ENCODE measurements at regions of chr3 and their contacts with region 1.

Region 1: GRCh38 chr3:128617557-128618397 is 32.8 kb downstream of the RPN1 start:
- DNase-seq: peak; percentile 93
- ATAC-seq: peak; percentile 97
- H3K4me3 ChIP-seq: peak overlapping the region; percentile 66
- H3K27ac ChIP-seq: peak overlapping the region; percentile 78
- H3K4me1 ChIP-seq: peaks cover 14% of the 10 kb centered on the region
- H3K27me3 ChIP-seq: no peaks in the 10 kb centered on the region
- CTCF ChIP-seq: peak; percentile 82
- POLR2A ChIP-seq: no peak
- RAD21 ChIP-seq: peak; percentile 62

Region 2: DNA sequence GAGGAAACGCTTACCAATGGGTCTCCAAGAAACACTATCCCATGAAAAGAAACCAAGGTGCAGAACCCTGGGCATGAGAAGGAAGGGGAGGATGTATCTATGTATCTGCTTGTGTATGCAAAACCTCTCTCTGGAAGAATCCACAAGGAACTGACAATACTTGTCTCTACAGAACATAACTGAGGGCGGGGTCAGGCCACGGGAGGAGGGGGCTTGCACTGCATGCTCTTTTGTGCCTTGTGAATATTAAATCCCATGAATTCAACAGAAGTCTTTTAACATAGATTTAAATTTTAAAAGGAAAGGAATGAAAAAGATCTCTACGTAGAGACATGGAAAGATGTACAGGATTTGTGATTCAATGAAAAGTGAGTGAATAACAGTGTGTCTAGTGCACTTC is 24.9 kb before region 1 on chr3:
- CTCF ChIA-PET with region 1: no interaction called
- POLR2A ChIA-PET with region 1: no interaction called
- dilution Hi-C with region 1: no loop called
- in situ Hi-C with region 1: no loop called
- intact Hi-C with region 1: no loop called
- DNase-seq: no peak
- ATAC-seq: no peak
- H3K4me3 ChIP-seq: no peak overlapping the region
- H3K27ac ChIP-seq: no peak overlapping the region
- H3K4me1 ChIP-seq: no peaks in the 10 kb centered on the region; the same call in 1 of the 2 replicates
- H3K27me3 ChIP-seq: no peaks in the 10 kb centered on the region; the same call in none of the 2 replicates
- CTCF ChIP-seq: no peak
- POLR2A ChIP-seq: no peak
- RAD21 ChIP-seq: no peak

Region 3: GRCh38 chr3:128794770-128795649 is 177.2 kb after region 1 on chr3:
- CTCF ChIA-PET with region 1: interaction called, 4 read pairs
- POLR2A ChIA-PET with region 1: no interaction called
- dilution Hi-C with region 1: no loop called
- in situ Hi-C with region 1: no loop called
- intact Hi-C with region 1: loop called (anchors 10 kb)
- DNase-seq: peak; percentile 61
- ATAC-seq: peak; percentile 96
- H3K4me3 ChIP-seq: no peak overlapping the region; the same call in 1 of the 2 replicates
- H3K27ac ChIP-seq: no peak overlapping the region
- H3K4me1 ChIP-seq: peaks cover 6% of the 10 kb centered on the region
- H3K27me3 ChIP-seq: no peaks in the 10 kb centered on the region
- CTCF ChIP-seq: peak; percentile 70
- POLR2A ChIP-seq: no peak
- RAD21 ChIP-seq: peak; percentile 64

Region 4: GRCh38 chr3:128845778-128846485 is 228.2 kb after region 1 on chr3:
- CTCF ChIA-PET with region 1: no interaction called
- POLR2A ChIA-PET with region 1: no interaction called
- dilution Hi-C with region 1: no loop called
- in situ Hi-C with region 1: no loop called
- intact Hi-C with region 1: loop called (anchors 1 kb)
- DNase-seq: peak; percentile 48
- ATAC-seq: peak; percentile 95
- H3K4me3 ChIP-seq: peak overlapping the region; percentile 16
- H3K27ac ChIP-seq: no peak overlapping the region; the same call in 1 of the 2 replicates
- H3K4me1 ChIP-seq: peaks cover 6% of the 10 kb centered on the region; the same call in 1 of the 2 replicates
- H3K27me3 ChIP-seq: no peaks in the 10 kb centered on the region
- CTCF ChIP-seq: peak; percentile 54
- POLR2A ChIP-seq: no peak
- RAD21 ChIP-seq: peak; percentile 40

Measured in IMR-90 (cell line).